ENCODE measurements at regions of chr1 and their contacts with region 1.

Region 1: DNA sequence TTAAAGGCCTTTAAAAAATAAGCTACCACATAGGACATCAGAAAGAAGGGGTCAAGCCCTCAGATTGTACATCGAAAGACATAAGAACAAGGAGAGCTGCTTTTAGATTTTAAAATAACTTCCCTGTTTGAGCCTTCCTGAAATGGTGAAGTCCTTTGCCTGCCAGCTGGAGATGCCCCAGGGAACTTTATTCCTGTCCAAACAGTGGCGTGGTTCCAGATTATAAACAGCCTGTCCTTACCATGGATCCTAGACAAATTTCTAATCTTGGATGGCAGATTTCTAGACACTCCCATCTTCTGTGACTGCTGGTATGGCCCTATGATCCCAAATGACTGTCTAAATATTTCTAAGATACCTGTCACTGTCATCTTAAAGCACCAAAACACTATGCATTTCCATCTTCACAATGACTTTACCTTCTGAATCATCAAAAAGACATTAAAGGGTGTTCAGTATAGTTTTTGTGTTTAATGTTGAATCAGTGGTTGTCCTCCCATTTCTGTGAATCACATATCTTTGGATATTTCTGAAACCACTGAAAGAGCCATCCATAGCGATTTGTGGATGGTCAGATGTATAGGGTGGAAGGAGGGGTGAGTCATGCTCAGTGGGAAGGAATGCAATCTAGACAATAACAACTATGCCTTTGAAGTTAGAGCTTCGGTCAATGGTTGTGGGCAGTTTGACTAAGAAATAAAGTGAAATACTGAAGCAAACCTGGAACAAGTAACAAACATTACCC is 23.2 kb downstream of the ILDR2 start:
- DNase-seq: peak; percentile 13
- H3K4me3 Mint-ChIP-seq: no peak overlapping the region
- H3K27ac Mint-ChIP-seq: no peak overlapping the region
- H3K4me1 Mint-ChIP-seq: peaks cover 21% of the 10 kb centered on the region
- H3K27me3 Mint-ChIP-seq: peaks cover 10% of the 10 kb centered on the region

Region 2: DNA sequence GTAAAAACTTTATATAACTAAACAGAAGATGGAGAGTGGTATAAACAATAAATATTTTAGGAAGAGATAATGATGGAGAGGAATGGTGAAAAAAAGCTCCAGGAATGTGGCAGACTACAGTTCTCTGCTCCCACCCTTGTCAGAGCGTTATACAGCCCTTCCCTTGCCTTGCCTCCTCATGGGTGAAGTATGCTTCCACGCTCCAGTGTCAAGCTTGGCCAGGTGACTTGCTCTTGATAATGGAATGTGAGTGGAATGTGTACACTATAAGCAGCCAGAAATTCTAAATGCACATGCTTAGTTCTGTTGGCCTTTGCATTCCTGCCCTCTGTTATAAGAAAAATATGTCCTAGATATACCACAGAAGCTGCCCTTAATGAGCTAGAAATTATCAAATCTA is 137.6 kb before region 1 on chr1:
- CTCF ChIA-PET with region 1: no interaction called
- POLR2A ChIA-PET with region 1: no interaction called
- intact Hi-C with region 1: no loop called
- DNase-seq: no peak
- H3K4me3 Mint-ChIP-seq: no peak overlapping the region
- H3K27ac Mint-ChIP-seq: no peak overlapping the region
- H3K4me1 Mint-ChIP-seq: no peaks in the 10 kb centered on the region
- H3K27me3 Mint-ChIP-seq: peaks cover 11% of the 10 kb centered on the region

Region 3: GRCh38 chr1:166920561-166921475 is 31.4 kb before region 1 on chr1:
- CTCF ChIA-PET with region 1: no interaction called
- POLR2A ChIA-PET with region 1: no interaction called
- intact Hi-C with region 1: loop called (anchors 2 kb)
- DNase-seq: no peak
- H3K4me3 Mint-ChIP-seq: no peak overlapping the region
- H3K27ac Mint-ChIP-seq: no peak overlapping the region
- H3K4me1 Mint-ChIP-seq: no peaks in the 10 kb centered on the region
- H3K27me3 Mint-ChIP-seq: peaks cover 27% of the 10 kb centered on the region

Region 4: DNA sequence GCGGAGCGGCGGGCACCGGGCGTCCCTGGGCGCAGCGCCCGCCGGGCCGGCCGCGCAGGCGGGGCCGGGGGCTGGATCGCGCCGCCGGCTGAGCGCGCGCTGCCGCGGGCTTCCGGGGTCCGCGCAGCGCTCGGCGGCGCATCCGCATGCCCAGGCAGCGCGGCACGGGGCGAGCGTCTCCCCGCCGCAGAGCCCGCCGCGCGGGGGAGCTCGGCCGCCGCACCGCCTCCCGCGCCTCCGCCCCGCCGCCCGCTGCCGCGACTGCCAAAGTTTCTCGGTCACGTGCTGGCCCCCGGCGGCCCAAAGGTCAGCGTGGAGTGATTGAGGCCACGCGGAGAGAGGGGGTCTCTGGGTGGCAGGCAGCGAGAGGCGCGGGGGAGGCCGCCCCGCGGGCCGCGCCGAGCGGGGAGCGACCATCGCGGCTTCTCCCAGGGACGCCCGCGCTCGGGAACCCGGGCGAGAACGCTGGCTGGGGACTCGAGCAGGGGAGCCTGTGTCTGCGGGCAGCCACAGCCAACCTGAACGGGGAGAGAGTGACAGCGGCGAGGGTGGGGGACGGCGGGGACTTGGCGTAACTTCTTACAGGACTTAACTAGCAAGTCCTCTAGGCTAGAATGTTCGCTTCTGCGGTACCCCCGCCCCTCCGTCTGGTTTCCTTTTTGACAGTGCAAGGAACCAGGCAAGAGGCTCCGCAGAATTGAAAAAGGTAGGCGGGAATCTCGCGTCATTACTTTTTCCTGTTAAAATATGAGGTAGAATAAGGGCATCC is 23.4 kb after region 1 on chr1 and contains the start of gene ILDR2:
- CTCF ChIA-PET with region 1: interaction called, 3 read pairs
- POLR2A ChIA-PET with region 1: interaction called, 5 read pairs
- intact Hi-C with region 1: loop called (anchors 1 kb)
- DNase-seq: peak; percentile 88
- H3K4me3 Mint-ChIP-seq: peak within 1 kb of the TSS; percentile 88
- H3K27ac Mint-ChIP-seq: peak within 1 kb of the TSS; percentile 88
- H3K4me1 Mint-ChIP-seq: peaks cover 47% of the 10 kb centered on the region
- H3K27me3 Mint-ChIP-seq: peaks cover 16% of the 10 kb centered on the region
- total RNA-seq, gene ILDR2: 12.5 to 13.0 TPM

Region 5: GRCh38 chr1:166999090-166999489 is 46.9 kb after region 1 on chr1:
- CTCF ChIA-PET with region 1: no interaction called
- POLR2A ChIA-PET with region 1: interaction called, 3 read pairs
- intact Hi-C with region 1: loop called (anchors 1 kb)
- DNase-seq: no peak
- H3K4me3 Mint-ChIP-seq: no peak overlapping the region
- H3K27ac Mint-ChIP-seq: peak overlapping the region; percentile 30
- H3K4me1 Mint-ChIP-seq: peaks cover 9% of the 10 kb centered on the region
- H3K27me3 Mint-ChIP-seq: peaks cover 10% of the 10 kb centered on the region

Measured in activated CD4-positive, alpha-beta memory T cell treated with anti-CD3 and anti-CD28 coated beads for 36 hours (primary cell).